ENCODE measurements at regions of chr1 and their contacts with region 1.

Region 1: GRCh38 chr1:8348777-8349491 is 31.0 kb downstream of the SLC45A1 start:
- DNase-seq: peak in 4 of 10 donors; percentile 53 to 75 (median 56)
- H3K4me3 ChIP-seq: no peak overlapping the region
- H3K27ac ChIP-seq: peak overlapping the region in 5 of 59 donors; percentile 18 to 48 (median 27)
- H3K27me3 ChIP-seq: no peaks in the 10 kb centered on the region
- CTCF ChIP-seq: peak; percentile 20 to 93 (median 78)

Region 2: DNA sequence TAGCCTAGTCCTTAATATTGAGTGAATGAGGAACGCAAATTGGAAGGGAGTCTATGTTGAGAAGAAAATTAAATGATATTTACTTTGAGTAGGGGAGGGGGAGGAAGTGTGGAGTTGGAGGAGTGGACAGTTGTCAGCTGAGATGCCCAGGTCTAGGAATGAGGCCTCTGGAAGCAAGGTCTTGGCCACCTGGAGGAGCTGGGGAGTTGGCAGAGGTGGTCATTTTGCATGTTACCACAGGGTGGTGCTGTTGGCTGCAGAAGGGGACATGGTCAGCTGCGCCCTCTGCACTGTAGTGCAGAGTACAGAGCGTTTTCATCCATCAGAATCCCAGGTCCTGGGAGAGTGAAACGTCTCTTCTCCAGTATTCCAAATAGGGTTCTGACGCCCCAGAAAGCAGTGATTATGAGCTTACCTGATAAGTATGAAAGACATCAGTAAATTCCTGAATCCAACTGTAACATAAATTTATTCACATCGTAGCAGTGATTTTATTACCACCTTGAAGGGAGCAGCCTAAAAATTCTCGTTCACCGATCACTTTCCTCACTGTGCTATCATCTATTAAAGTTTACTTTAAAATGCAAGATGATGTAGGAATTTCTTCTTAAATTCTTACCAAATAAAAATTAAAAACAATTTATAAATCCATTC is 373.6 kb before region 1 on chr1:
- intact Hi-C with region 1: loop called (anchors 2 to 5 kb)
- DNase-seq: peak in 9 of 10 donors; percentile 45 to 87 (median 66)
- H3K4me3 ChIP-seq: no peak overlapping the region
- H3K27ac ChIP-seq: peak overlapping the region in 35 of 59 donors; percentile 3 to 68 (median 28)
- H3K27me3 ChIP-seq: no peaks in the 10 kb centered on the region
- CTCF ChIP-seq: peak; percentile 63 to 95 (median 86)

Region 3: DNA sequence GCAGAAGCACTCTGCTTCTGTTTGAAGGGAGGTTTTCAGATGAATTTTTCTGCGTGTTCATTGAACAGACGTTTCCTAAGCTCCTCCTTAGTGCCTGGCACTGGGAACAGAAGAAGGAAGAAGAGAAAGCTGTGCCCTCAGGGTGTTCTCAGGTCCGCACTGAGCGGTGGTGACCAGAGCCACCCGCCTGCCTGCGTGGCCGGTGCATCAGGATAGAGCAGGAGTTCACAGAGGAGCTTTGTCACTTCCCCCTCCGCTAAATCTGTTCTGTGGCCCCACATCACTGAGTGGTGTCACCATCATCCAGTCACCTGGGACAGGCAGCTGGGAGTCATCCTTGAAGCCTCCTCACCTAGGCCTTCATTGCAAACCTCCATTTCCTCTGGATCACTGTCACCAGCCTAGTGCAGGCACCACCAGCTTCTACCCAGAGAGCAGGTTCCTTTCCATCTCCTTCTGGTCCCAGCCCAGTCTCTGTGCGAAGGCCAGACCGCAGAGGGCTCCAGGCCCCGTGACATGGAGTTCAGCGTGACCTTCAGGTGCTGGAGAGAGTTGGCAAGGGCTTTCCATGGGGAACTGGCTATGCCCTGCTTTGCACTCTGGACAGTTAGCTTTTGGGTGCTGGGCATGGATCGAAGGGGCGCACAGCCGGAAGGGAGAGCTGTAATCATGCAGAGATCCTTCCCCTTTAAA is 365.7 kb before region 1 on chr1:
- intact Hi-C with region 1: loop called in 1 of 2 experiments (anchors 5 kb)
- DNase-seq: no peak
- H3K4me3 ChIP-seq: no peak overlapping the region
- H3K27ac ChIP-seq: peak overlapping the region in 10 of 59 donors; percentile 4 to 53 (median 22)
- H3K27me3 ChIP-seq: no peaks in the 10 kb centered on the region
- CTCF ChIP-seq: no peak

Region 4: GRCh38 chr1:8010080-8010664 is 338.8 kb before region 1 on chr1:
- intact Hi-C with region 1: loop called in 1 of 2 experiments (anchors 5 kb)
- DNase-seq: no peak
- H3K4me3 ChIP-seq: no peak overlapping the region
- H3K27ac ChIP-seq: peak overlapping the region in 3 of 59 donors; percentile 2 to 19 (median 11)
- H3K27me3 ChIP-seq: no peaks in the 10 kb centered on the region
- CTCF ChIP-seq: no peak

Region 5: DNA sequence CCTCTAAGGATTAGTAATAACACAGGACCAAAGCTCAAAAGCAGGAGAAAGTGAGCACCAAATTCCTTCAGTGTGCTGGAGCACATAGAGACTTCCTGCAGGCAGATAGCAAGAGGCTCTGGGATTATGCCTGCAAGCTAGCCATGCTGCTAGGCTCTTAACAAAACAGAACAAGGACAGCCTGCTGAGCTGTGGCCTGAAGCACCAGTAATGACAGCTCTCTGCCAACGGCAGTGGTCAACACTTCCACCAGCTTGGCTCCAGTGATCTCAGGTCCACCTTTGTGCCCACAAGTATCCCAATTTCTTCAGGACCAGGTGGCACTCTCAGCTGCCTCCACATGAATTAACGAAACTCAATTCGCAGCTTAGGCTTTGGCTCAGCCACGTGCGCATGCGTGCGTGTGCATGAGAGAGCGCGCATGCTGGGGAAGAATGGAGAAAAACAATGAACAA is 33.1 kb after region 1 on chr1:
- intact Hi-C with region 1: no loop called
- DNase-seq: peak in 3 of 10 donors; percentile 55 to 63 (median 57)
- H3K4me3 ChIP-seq: peak overlapping the region in 24 of 59 donors; percentile 2 to 44 (median 24)
- H3K27ac ChIP-seq: peak overlapping the region in 56 of 59 donors; percentile 5 to 83 (median 68)
- H3K27me3 ChIP-seq: no peaks in the 10 kb centered on the region
- CTCF ChIP-seq: peak in 4 of 56 donors; percentile 11 to 34 (median 18)